ENCODE measurements at regions of chr3 and their contacts with region 1.

Region 1: GRCh38 chr3:88203642-88204055 is 53.9 kb downstream of the C3orf38 start:
- DNase-seq: no peak
- H3K4me3 ChIP-seq: no peak overlapping the region
- CTCF ChIP-seq: peak; percentile 90

Region 2: DNA sequence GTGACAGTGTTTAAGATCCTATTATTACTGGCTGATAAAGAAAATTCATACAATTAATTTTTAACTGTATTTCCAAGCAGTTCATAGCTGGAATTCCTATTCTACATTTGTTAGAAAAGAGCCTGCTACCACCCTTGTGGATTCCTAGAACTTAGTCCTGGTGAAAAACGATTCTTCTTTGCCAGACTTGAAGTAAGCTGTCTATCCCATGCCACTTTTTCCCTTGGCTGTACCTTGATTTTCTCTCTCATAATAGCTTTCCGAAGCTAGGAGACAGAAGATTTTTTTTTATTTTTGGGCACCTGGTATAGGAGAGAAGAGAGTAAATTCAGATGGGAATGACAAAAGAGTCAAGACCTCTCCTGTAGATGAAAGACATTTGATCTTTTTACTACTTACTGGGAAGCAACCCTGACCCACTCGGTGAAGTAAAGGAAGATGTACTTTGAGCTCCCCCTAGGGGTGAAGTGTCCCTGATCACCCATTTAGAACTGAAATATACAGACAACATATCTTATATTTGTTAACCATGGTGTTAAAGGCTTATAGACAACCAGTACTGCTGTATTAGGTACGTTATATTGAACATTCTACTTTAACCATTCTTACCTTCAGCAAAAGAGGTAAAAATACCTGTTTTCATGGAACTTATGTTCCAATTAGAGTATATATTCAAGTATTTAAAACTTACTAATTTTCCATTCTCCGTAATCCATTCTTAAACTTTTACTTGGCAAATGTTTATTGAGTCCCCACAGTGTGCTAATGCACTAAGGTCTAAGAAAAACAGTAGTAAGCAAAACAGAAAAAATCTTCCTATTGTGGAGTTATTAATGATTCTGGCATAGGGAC is 90.1 kb before region 1 on chr3:
- CTCF ChIA-PET with region 1: no interaction called
- POLR2A ChIA-PET with region 1: no interaction called
- DNase-seq: peak; percentile 31
- H3K4me3 ChIP-seq: no peak overlapping the region
- CTCF ChIP-seq: peak; percentile 63

Region 3: DNA sequence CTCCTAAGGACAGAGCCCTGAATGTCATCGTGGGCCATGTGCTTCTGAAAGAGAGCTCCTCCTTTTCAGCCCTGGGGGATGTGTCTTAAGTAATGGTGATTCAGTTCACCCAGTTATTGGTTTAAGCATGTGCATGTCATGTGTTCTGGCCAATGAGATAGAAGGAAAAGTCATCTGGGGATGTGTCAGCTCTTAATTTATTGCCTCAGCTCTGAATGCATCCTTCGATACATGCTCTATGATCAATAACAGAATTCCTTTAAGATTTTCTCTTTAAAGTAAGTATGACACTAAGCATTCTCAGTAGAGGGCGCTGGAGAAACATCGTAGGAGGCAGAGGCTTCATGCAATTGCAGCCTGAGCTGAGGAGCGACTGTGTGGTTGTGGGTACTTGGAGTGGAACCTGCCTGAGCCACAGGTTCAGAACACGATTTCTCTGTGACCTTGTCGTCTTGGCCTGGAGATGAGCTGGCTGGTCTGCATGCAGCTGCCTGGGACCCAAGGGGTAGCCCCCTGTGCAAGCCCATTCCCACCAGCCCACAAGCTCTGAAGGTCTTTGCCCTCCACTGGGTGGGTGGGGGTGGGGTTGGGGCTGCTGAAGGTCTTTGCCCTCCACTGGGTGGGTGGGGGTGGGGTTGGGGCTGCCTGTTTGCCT is 15.6 kb after region 1 on chr3:
- CTCF ChIA-PET with region 1: interaction called, 10 read pairs
- POLR2A ChIA-PET with region 1: no interaction called
- DNase-seq: no peak
- H3K4me3 ChIP-seq: no peak overlapping the region
- CTCF ChIP-seq: peak; percentile 56

Region 4: DNA sequence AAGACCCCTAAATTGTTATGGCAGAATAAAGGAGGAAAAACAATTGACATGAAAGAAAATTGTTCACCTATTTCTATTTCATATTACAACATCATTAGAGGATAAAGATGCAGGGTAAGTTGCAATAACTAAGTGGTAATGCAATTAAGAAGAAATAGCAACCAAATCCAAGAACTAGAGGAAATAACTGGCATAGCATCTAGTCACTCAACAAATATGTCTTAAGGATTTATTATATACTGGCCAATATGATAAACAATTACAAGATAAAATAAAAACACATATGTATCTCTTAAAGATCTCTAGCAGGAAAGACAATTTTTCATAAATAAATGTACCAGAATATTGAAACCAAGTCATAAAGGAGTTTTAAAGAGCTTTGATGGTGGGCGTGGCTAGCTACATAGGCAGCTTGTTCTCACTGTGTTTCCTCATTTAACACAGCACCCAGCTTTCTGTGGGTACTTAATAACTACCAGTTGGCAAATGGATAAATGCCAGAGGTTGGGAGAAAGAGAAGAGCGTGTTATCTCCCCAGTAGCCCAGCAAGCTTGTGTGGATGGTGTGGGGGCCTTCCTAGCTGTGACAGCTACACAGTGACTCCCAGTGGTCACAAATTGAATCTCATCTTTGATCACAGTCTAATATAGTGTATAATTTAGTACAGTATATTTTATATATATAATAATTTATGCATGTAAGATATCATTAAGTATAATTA is 1887.7 kb after region 1 on chr3:
- CTCF ChIA-PET with region 1: interaction called, 12 read pairs
- POLR2A ChIA-PET with region 1: no interaction called
- DNase-seq: no peak
- H3K4me3 ChIP-seq: no peak overlapping the region
- CTCF ChIP-seq: peak; percentile 37

Measured in AG04449 (cell line).